AG04450 (cell line): ENCODE measurements at regions of chr2 and their contacts with region 1.

Region 1: DNA sequence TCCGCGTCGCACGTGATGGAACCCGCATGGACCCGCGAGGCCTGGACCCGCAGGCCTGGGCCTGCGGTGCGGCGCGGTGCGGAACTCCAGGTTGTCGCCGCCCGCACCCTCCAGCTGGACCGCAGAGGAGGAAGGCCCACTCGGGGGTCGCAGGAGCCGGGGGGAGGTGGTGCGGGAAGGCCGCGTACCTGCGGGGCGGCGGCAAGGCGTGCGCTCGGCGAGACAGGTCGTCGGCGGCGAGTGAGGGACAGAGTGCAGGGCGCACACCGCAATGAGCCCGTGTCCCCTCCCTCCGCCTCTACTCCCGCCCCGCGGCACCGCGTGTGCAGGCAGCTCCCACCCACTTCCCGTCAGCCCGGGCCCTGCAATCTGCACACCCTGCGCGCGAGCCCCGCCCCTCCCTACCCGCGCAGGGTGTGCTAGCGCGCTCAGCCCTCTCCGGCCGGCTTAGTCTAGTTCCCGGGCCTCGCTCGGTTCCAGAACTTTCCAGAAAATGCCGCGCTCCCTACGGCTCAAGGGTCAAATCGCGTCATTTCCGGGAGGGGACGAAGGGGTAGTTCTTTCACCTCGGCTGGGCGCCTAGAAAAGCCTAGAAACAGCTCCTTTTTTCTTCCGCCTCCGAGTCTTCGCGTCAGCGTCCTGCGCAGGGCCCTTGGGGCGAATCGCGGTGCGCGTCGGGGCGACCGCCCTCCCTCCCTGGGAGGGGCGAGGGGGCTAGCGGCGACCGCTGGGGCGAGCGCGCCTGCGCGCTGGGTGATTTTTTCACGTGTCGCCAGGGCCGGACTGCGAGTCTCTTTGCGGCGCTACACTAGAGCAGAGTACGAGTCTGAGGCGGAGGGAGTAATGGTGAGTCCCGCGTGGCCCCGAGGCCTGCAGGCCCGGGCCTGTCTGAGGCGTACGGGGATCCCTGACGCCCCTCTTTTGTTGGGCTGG is at the starts of genes HSPD1 and HSPE1:
- DNase-seq: peak; percentile 98
- H3K4me3 ChIP-seq: peak within 1 kb of the TSS; percentile 87
- H3K27ac ChIP-seq: peak within 1 kb of the TSS; percentile 91
- H3K27me3 ChIP-seq: no peaks in the 10 kb centered on the region
- CTCF ChIP-seq: no peak
- polyA plus RNA-seq, gene HSPD1: 216 and 283 TPM in 2 replicates
- polyA plus RNA-seq, gene HSPE1: 81.2 and 134 TPM in 2 replicates

Region 2: DNA sequence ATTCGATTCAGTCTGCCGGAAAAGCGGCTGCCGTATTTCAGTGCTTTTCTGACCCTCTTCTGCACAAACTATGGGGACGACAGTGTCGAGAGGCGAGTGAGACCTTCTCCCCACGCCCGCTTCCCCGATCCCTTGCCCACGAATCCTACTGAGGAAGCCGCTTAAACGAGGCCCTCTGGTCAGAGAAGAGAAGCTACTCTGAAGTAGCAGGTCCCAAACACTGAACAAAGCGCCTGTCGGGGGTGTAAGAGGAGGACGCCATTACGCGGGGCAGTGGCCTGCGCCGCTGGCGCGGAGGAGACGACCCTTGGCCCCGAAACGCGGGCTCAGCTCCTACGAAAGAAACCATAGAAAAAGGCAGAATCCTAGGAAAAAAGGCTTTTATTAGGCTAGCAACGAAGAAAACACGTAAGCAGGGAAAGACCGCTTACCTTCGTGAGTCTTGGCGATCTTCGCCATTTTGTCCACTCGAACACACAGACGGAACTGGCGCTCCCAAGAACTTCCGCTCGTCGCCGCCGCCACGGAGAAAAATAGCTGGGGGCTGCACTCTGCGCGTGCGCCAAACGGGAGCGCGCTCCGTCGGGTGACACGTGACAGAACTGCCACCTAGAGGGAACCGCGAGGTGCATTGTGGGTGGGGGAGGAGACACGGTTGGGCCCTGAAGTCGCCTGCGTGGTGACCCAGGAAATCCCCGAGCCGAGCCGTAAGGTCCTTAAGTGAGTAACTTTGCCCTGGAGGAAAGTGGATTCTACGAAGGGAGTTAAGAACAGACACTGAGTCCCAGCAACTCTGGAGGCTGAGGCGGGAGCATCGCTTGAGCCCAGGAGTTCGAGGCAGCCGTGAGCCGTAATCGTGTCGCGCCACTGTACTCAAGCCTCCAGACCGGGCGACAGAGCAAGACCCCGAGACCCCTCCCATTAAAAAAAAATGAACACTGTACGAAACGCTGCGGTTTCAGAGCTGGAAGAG is 65.0 kb before region 1 on chr2 and contains the start of gene SF3B1:
- CTCF ChIA-PET with region 1: no interaction called
- POLR2A ChIA-PET with region 1: interaction called, 13 read pairs
- DNase-seq: peak; percentile 94
- H3K4me3 ChIP-seq: peak within 1 kb of the TSS; percentile 70
- H3K27ac ChIP-seq: peak within 1 kb of the TSS; percentile 97
- H3K27me3 ChIP-seq: no peaks in the 10 kb centered on the region
- CTCF ChIP-seq: no peak
- polyA plus RNA-seq, gene SF3B1: 502 and 651 TPM in 2 replicates

Region 3: GRCh38 chr2:197453161-197453914 is 46.5 kb before region 1 on chr2 and contains the start of gene COQ10B:
- CTCF ChIA-PET with region 1: no interaction called
- POLR2A ChIA-PET with region 1: interaction called, 47 read pairs
- DNase-seq: peak; percentile 100
- H3K4me3 ChIP-seq: peak within 1 kb of the TSS; percentile 98
- H3K27ac ChIP-seq: peak within 1 kb of the TSS; percentile 100
- H3K27me3 ChIP-seq: no peaks in the 10 kb centered on the region
- CTCF ChIP-seq: peak; percentile 29
- polyA plus RNA-seq, gene COQ10B: 5.8 and 8.8 TPM in 2 replicates

Region 4: DNA sequence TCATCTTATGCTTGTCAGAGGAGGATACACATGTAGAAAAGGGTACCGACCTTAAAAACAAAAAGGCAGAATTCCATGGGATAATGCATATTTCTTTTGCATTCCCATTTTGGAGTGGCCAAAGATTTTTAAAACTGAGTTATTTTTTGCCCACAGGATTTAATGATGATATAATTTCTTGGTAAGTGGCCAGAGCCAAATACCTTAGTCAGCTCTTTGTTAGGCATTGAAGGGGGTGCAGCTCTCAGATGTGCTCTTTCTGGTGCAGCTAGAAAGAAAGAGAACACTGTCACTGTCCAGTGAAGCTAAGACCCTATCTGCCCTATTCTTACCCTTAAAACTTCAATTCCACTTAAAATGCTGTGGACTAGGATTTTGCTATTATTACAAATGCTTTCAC is 35.7 kb before region 1 on chr2:
- CTCF ChIA-PET with region 1: no interaction called
- POLR2A ChIA-PET with region 1: interaction called, 10 read pairs
- DNase-seq: no peak
- H3K4me3 ChIP-seq: no peak overlapping the region
- H3K27ac ChIP-seq: no peak overlapping the region
- H3K27me3 ChIP-seq: no peaks in the 10 kb centered on the region
- CTCF ChIP-seq: no peak

Region 5: GRCh38 chr2:197515739-197516392 is 16.0 kb after region 1 on chr2 and contains the start of gene MOB4:
- CTCF ChIA-PET with region 1: interaction called, 3 read pairs
- POLR2A ChIA-PET with region 1: interaction called, 47 read pairs
- DNase-seq: peak; percentile 86
- H3K4me3 ChIP-seq: peak within 1 kb of the TSS; percentile 84
- H3K27ac ChIP-seq: peak within 1 kb of the TSS; percentile 73
- H3K27me3 ChIP-seq: no peaks in the 10 kb centered on the region
- CTCF ChIP-seq: no peak
- polyA plus RNA-seq, gene MOB4: 36.1 and 58.9 TPM in 2 replicates